PC-9 (cell line): ENCODE measurements at regions of chr5 and their contacts with region 1.

Region 1: GRCh38 chr5:10601246-10602030 is 37.6 kb downstream of the ANKRD33B start:
- DNase-seq: peak; percentile 93 to 99
- H3K4me3 ChIP-seq: peak overlapping the region; percentile 4; the same call in 1 of the 2 replicates
- H3K27ac ChIP-seq: peak overlapping the region; percentile 46
- H3K4me1 ChIP-seq: peaks cover 41% of the 10 kb centered on the region
- H3K27me3 ChIP-seq: no peaks in the 10 kb centered on the region
- CTCF ChIP-seq: no peak

Region 2: GRCh38 chr5:10546186-10546585 is 55.3 kb before region 1 on chr5:
- CTCF ChIA-PET with region 1: interaction called, 11 read pairs
- POLR2A ChIA-PET with region 1: interaction called, 9 read pairs
- intact Hi-C with region 1: loop called (anchors 1 kb)
- DNase-seq: no peak
- H3K4me3 ChIP-seq: no peak overlapping the region
- H3K27ac ChIP-seq: no peak overlapping the region
- H3K4me1 ChIP-seq: peaks cover 14% of the 10 kb centered on the region
- H3K27me3 ChIP-seq: no peaks in the 10 kb centered on the region
- CTCF ChIP-seq: no peak

Region 3: GRCh38 chr5:10563945-10564837 is 37.2 kb before region 1 on chr5 and contains the start of gene ANKRD33B:
- CTCF ChIA-PET with region 1: no interaction called
- POLR2A ChIA-PET with region 1: no interaction called
- intact Hi-C with region 1: loop called (anchors 1 kb)
- DNase-seq: peak; percentile 72 to 95
- H3K4me3 ChIP-seq: peak within 1 kb of the TSS; percentile 90
- H3K27ac ChIP-seq: peak within 1 kb of the TSS; percentile 86
- H3K4me1 ChIP-seq: peaks cover 46% of the 10 kb centered on the region
- H3K27me3 ChIP-seq: no peaks in the 10 kb centered on the region
- CTCF ChIP-seq: no peak
- total RNA-seq, gene ANKRD33B: 32.1 and 37.4 TPM in 2 replicates

Region 4: DNA sequence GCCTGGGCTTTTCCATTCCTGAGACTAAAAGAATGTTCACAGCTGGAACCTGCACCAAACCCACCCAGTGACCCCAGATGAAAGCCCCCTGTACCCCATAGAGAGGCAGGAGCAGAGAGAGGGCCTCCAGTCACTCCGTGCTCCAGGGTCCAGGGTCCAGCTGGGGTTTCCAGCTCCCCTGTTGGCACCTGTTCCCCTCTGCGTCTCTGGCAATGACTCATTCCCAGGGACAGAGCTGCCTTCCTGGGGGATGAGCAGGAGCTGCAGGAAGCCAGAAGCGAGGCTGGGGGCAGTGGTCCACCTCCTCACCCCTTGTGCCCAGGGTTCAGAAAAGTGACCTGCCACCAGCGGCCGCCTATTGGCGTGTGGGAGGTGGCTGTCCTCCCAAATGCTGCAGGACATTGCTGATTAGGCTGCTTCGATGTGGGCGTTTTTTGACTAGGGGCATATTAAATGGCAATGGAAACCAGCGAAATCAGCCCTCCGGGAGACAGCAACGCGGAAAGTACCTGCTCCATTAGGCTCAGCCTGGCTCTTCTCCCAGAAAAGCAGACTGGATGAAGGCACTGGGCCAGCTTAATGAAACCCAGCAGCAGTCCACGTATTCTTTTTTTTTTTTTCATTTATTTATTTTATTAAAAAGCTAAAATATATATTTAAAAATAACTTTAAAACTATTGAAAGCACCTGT is 62.2 kb after region 1 on chr5:
- CTCF ChIA-PET with region 1: no interaction called
- POLR2A ChIA-PET with region 1: no interaction called
- intact Hi-C with region 1: no loop called
- DNase-seq: no peak
- H3K4me3 ChIP-seq: no peak overlapping the region
- H3K27ac ChIP-seq: no peak overlapping the region
- H3K4me1 ChIP-seq: no peaks in the 10 kb centered on the region
- H3K27me3 ChIP-seq: no peaks in the 10 kb centered on the region
- CTCF ChIP-seq: no peak

Region 5: DNA sequence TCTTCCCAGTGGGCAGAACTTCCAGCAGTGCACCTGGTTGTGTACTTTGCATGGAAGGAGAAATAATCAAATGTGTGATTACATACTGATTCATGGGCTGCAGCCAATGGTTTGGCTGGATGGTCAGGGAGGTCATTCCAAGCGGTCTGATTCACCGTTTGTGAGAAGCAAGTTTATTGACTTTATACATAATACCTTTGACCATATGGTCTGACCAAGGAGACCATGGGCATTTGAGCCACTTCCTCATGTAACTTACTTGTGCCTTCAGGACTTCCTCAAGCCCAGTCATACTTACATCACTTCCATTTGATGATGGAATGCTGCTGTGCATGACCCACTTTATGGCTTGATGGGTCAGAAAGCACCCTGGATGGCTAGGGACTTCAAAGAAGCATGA is 118.5 kb after region 1 on chr5:
- CTCF ChIA-PET with region 1: no interaction called
- POLR2A ChIA-PET with region 1: no interaction called
- intact Hi-C with region 1: no loop called
- DNase-seq: peak; percentile 90 to 100
- H3K4me3 ChIP-seq: no peak overlapping the region
- H3K27ac ChIP-seq: peak overlapping the region; percentile 76
- H3K4me1 ChIP-seq: peaks cover 63% of the 10 kb centered on the region
- H3K27me3 ChIP-seq: no peaks in the 10 kb centered on the region
- CTCF ChIP-seq: no peak